K562 (cell line): ENCODE measurements at regions of chr6 and their contacts with region 1.

Region 1: GRCh38 chr6:14476793-14477531 is 359.4 kb downstream of the CD83 start:
- DNase-seq: peak; percentile 94 to 97 (median 96)
- ATAC-seq: peak; percentile 95
- H3K4me3 ChIP-seq: no peak overlapping the region; the same call in 1 of the 2 replicates
- H3K27ac ChIP-seq: peak overlapping the region; percentile 75
- H3K4me1 ChIP-seq: peaks cover 28 to 53% of the 10 kb centered on the region in 2 experiments; a peak in 4 of 5 replicates
- H3K27me3 ChIP-seq: no peaks in the 10 kb centered on the region
- CTCF ChIP-seq: peak in 1 of 3 experiments; percentile 6; a peak in 1 of 6 replicates
- EP300 ChIP-seq: peak; percentile 95
- POLR2A ChIP-seq: no peak
- RAD21 ChIP-seq: peak; percentile 44 to 49

Region 2: GRCh38 chr6:14464055-14464454 is 12.9 kb before region 1 on chr6:
- CTCF ChIA-PET with region 1: no interaction called
- POLR2A ChIA-PET with region 1: interaction called, 10 read pairs
- in situ Hi-C with region 1: no loop called
- intact Hi-C with region 1: no loop called
- DNase-seq: peak; percentile 69 to 81 (median 72)
- ATAC-seq: peak; percentile 90
- H3K4me3 ChIP-seq: no peak overlapping the region
- H3K27ac ChIP-seq: no peak overlapping the region; the same call in 2 of the 3 replicates
- H3K4me1 ChIP-seq: peaks cover 3 to 15% of the 10 kb centered on the region in 2 experiments; a peak in 4 of 5 replicates
- H3K27me3 ChIP-seq: no peaks in the 10 kb centered on the region
- CTCF ChIP-seq: peak; percentile 43 to 92 (median 78); a peak in 5 of 6 replicates
- EP300 ChIP-seq: no peak; the same call in 1 of the 2 replicates
- POLR2A ChIP-seq: no peak
- RAD21 ChIP-seq: peak; percentile 61 to 74